Mammary epithelial cell (primary cell): ENCODE measurements at regions of chr9 and their contacts with region 1.

Region 1: GRCh38 chr9:38160613-38161215 is 91.7 kb upstream of the SHB start:
- DNase-seq: no peak
- H3K4me3 ChIP-seq: no peak overlapping the region
- H3K27ac ChIP-seq: no peak overlapping the region
- H3K4me1 ChIP-seq: no peaks in the 10 kb centered on the region
- H3K27me3 ChIP-seq: no peaks in the 10 kb centered on the region
- CTCF ChIP-seq: peak; percentile 73 to 88

Region 2: GRCh38 chr9:37913480-37914153 is 247.1 kb before region 1 on chr9:
- CTCF ChIA-PET with region 1: no interaction called
- dilution Hi-C with region 1: no loop called
- in situ Hi-C with region 1: loop called (anchors 25 kb)
- intact Hi-C with region 1: loop called (anchors 1 kb)
- DNase-seq: peak; percentile 65
- H3K4me3 ChIP-seq: no peak overlapping the region
- H3K27ac ChIP-seq: no peak overlapping the region
- H3K4me1 ChIP-seq: peaks cover 18% of the 10 kb centered on the region
- H3K27me3 ChIP-seq: no peaks in the 10 kb centered on the region
- CTCF ChIP-seq: peak; percentile 96 to 98

Region 3: DNA sequence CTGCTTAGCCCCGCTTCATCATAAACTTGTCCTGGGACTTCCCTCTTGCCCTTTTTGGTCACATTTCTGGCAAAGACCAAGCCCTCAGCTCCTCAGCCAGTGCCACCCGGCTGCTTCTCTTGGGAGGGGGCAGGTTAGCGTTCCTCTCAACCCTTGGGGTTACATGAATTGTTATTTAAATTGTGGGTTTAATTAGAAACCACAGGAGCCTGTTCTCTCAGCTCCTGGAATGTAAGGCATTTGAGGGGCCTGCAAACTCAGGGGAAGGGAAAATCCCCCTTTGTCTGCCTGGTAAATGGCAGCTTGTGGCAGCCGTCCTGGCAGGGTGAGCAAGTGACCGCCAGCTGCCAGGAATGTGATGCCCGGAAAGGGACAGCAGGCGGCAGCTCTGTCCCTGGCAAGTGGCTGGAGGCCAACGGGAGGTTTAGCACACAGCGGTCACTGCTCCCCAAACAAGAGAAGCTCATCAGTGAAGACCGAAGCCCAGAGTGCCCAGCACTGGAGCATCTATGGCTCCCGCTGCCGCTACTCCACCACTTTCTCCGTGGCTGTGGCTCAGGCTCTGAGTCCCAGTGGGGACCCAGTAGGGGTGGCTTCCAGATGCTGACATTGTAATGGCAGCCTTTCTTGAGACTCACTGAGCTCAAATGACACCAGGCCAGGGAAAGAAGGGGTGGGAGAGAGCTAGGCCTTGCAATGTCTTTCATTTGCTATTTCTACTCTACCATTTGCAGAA is 143.4 kb before region 1 on chr9:
- CTCF ChIA-PET with region 1: no interaction called
- dilution Hi-C with region 1: no loop called
- in situ Hi-C with region 1: no loop called
- intact Hi-C with region 1: loop called (anchors 5 kb)
- DNase-seq: peak; percentile 52
- H3K4me3 ChIP-seq: no peak overlapping the region
- H3K27ac ChIP-seq: peak overlapping the region; percentile 44
- H3K4me1 ChIP-seq: peaks cover 54% of the 10 kb centered on the region
- H3K27me3 ChIP-seq: no peaks in the 10 kb centered on the region
- CTCF ChIP-seq: peak; percentile 20 to 68

Region 4: DNA sequence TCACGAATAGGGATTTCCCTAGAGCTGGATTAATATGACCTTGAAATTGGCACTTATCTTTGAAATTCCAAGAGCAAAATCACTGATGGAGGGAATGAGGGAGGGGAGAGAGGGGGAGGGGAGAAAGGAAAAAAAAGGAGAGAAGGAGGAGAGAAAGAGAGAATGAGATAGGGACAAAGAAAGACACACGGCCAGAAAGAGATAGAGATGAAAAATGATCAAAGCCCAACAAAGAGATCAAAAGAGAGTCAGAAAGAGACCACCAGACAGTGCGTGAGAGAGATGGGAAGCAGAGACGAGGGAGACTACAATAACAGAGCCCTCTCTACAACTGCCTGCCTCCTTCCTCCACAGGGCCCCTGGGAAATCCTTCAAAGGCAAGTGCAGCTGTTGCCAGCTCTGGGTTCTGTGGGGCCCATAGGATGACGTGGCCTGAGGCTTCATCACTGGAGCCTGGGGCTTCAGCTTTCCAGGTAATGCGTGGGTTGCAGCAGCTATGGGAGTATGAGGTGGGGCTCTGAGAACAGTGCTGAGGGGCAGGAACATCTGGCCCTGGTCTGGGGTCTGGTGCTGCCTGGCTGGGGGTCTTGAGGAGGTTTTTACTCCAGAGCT is 33.3 kb before region 1 on chr9:
- CTCF ChIA-PET with region 1: no interaction called
- dilution Hi-C with region 1: loop called (anchors 5 kb)
- in situ Hi-C with region 1: no loop called
- intact Hi-C with region 1: no loop called
- DNase-seq: no peak
- H3K4me3 ChIP-seq: no peak overlapping the region
- H3K27ac ChIP-seq: no peak overlapping the region
- H3K4me1 ChIP-seq: no peaks in the 10 kb centered on the region
- H3K27me3 ChIP-seq: no peaks in the 10 kb centered on the region
- CTCF ChIP-seq: no peak

Region 5: GRCh38 chr9:38301376-38302106 is 140.8 kb after region 1 on chr9:
- CTCF ChIA-PET with region 1: interaction called, 18 read pairs
- dilution Hi-C with region 1: no loop called
- in situ Hi-C with region 1: no loop called
- intact Hi-C with region 1: no loop called
- DNase-seq: no peak
- H3K4me3 ChIP-seq: no peak overlapping the region
- H3K27ac ChIP-seq: no peak overlapping the region
- H3K4me1 ChIP-seq: no peaks in the 10 kb centered on the region
- H3K27me3 ChIP-seq: no peaks in the 10 kb centered on the region
- CTCF ChIP-seq: no peak